Activated CD8-positive, alpha-beta T cell treated with anti-CD3 and anti-CD28 coated beads for 36 hours (primary cell): ENCODE measurements at regions of chr11 and their contacts with region 1.

Region 1: DNA sequence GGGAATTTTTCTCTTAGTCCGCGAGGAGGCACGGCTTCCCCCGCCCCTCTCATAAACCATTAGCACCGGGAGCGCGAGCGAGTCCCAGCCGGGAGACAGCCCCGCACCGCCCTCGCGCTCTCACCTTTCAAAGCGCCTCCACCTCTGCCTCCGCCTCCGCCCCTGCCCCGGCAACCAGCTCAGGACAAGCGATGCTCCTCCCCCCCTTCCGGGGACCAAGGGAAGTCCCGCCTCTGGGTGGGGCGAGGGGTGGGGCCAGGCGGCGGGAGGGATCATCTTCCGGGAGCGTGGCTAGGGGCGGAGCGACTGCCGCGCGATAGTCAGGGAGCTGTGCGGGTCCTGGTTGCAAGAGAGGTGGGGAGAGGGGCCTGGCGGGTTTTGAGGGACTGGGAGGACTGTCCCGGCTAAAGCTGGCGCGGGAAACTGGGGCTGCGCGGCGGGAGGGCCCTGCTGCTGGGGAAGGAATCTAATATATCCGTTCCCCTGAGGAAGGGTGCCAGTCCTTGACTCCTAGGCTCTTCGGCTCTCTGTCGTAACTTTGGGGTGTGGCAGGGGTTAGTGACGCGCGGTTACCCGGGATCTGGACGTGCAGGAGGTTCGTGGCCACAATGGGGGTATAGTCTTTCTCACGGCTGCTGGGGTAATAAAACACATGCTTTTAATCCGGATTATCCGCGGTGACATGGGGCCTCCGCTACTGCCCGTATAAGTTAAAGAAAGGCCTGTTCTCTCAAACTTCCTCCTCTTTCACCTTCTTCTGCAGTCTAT is at the starts of genes CCDC82 and JRKL:
- DNase-seq: peak; percentile 99
- ATAC-seq: peak; percentile 98
- H3K4me3 Mint-ChIP-seq: peak within 1 kb of the TSS; percentile 89
- H3K27ac Mint-ChIP-seq: peak within 1 kb of the TSS; percentile 96
- H3K4me1 Mint-ChIP-seq: peaks cover 48% of the 10 kb centered on the region
- H3K27me3 Mint-ChIP-seq: no peaks in the 10 kb centered on the region
- CTCF ChIP-seq: no peak
- total RNA-seq, gene CCDC82: 25.3 to 27.0 TPM
- total RNA-seq, gene JRKL: 13.3 to 13.5 TPM

Region 2: DNA sequence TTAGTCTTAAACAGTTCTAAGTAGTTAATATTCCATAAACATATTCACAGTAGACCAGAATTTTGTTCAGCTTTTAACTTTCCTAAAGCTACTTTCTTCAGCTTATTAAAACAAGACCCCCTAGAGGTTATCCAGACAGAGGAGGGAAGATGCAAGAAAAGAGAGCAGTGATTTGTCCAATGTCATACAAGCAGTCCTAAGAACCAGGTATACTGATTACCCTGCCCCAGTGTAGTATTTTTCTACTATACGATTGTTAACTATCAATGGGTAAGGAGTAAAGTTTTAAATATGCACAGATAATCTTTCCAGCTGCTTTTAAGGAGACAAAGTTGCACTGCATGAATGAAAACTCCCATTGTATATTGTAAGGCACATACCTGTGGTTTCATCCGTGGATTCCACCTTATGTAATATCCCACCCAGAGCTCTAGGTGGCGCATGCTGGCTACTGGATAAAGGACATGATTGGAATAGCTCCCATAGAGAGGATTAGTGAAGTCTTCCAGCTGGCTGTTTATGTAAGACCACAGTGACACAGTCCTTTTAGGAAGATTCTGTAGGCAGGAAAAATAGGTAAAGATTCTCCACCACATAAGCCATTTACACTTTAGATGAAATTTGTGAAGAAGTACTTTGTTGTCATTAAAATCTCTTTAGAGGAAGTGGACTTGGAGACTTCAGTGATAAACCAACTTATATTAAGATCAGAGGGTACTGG is 554.0 kb before region 1 on chr11:
- CTCF ChIA-PET with region 1: interaction called, 34 read pairs
- POLR2A ChIA-PET with region 1: no interaction called
- intact Hi-C with region 1: loop called (anchors 10 kb)
- DNase-seq: peak; percentile 60
- ATAC-seq: peak; percentile 93
- H3K4me3 Mint-ChIP-seq: no peak overlapping the region
- H3K27ac Mint-ChIP-seq: no peak overlapping the region
- H3K4me1 Mint-ChIP-seq: peaks cover 6% of the 10 kb centered on the region
- H3K27me3 Mint-ChIP-seq: no peaks in the 10 kb centered on the region
- CTCF ChIP-seq: peak; percentile 85

Region 3: DNA sequence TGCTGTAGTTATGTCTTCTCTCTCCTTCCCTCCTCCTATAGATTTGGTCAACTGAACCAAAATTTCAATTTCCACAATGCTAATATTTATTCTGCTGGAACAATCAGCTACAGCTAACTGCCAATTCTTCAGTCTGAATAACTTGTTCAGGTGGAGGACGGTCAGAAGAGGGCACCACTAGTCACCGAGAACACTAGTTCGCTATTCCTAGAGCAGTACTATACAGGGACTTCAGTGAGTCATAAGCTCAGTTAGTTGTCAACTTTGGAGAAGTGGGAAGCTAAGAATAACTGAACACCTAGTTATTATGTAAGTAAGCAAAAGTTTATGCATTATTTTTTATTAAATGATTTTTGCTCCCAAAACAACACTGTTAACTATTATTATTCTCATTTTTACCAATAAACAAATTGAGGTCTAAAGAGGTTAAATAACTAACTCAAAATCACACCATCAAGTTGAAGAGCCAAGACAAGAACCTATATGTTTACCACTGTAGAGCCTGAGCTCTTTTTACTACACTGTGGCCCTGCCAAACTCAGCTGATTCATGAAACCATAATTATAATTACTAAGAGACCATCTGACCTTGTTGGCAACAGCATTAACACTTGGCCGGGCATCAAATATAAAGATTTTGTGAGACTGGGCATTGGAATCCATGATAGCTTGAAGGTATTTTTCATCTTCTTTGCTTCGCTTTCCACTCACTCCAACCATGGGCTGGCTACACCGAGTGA is 540.6 kb before region 1 on chr11:
- CTCF ChIA-PET with region 1: interaction called, 11 read pairs
- POLR2A ChIA-PET with region 1: no interaction called
- intact Hi-C with region 1: no loop called
- DNase-seq: peak; percentile 44
- ATAC-seq: peak; percentile 66
- H3K4me3 Mint-ChIP-seq: no peak overlapping the region
- H3K27ac Mint-ChIP-seq: no peak overlapping the region
- H3K4me1 Mint-ChIP-seq: peaks cover 11% of the 10 kb centered on the region
- H3K27me3 Mint-ChIP-seq: no peaks in the 10 kb centered on the region
- CTCF ChIP-seq: peak; percentile 49

Region 4: GRCh38 chr11:96054870-96055705 is 334.8 kb before region 1 on chr11:
- CTCF ChIA-PET with region 1: interaction called, 15 read pairs
- POLR2A ChIA-PET with region 1: no interaction called
- intact Hi-C with region 1: loop called (anchors 10 kb)
- DNase-seq: no peak
- ATAC-seq: peak; percentile 34
- H3K4me3 Mint-ChIP-seq: no peak overlapping the region
- H3K27ac Mint-ChIP-seq: peak overlapping the region; percentile 73
- H3K4me1 Mint-ChIP-seq: peaks cover 75% of the 10 kb centered on the region
- H3K27me3 Mint-ChIP-seq: no peaks in the 10 kb centered on the region
- CTCF ChIP-seq: peak; percentile 78

Region 5: GRCh38 chr11:96091476-96091875 is 298.4 kb before region 1 on chr11:
- CTCF ChIA-PET with region 1: interaction called, 13 read pairs
- POLR2A ChIA-PET with region 1: no interaction called
- intact Hi-C with region 1: no loop called
- DNase-seq: peak; percentile 33
- ATAC-seq: peak; percentile 96
- H3K4me3 Mint-ChIP-seq: no peak overlapping the region
- H3K27ac Mint-ChIP-seq: no peak overlapping the region
- H3K4me1 Mint-ChIP-seq: peaks cover 73% of the 10 kb centered on the region
- H3K27me3 Mint-ChIP-seq: no peaks in the 10 kb centered on the region
- CTCF ChIP-seq: peak; percentile 14

Region 6: DNA sequence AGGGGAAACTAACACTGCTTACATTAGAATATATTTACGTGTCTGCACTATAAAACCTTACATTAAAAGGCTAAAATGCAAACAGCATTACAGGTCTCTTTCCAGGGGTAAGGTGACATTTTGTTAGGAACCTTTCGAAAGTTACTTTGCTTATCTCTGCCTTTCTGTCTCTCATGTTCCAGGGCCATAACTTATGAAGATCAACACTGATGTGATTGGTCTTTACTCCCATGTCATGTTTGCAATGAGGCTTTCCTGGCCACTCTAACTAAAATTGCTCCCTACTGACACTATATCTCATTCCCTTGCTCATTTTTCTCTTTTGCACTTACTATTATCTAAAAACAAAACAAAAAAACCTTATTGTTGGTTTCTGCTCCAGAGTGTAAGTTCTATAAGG is 119.0 kb after region 1 on chr11:
- CTCF ChIA-PET with region 1: no interaction called
- POLR2A ChIA-PET with region 1: no interaction called
- intact Hi-C with region 1: no loop called
- DNase-seq: no peak
- ATAC-seq: no peak
- H3K4me3 Mint-ChIP-seq: no peak overlapping the region
- H3K27ac Mint-ChIP-seq: no peak overlapping the region
- H3K4me1 Mint-ChIP-seq: no peaks in the 10 kb centered on the region
- H3K27me3 Mint-ChIP-seq: no peaks in the 10 kb centered on the region
- CTCF ChIP-seq: no peak